BJ (cell line): ENCODE measurements at regions of chr5 and their contacts with region 1.

Region 1: DNA sequence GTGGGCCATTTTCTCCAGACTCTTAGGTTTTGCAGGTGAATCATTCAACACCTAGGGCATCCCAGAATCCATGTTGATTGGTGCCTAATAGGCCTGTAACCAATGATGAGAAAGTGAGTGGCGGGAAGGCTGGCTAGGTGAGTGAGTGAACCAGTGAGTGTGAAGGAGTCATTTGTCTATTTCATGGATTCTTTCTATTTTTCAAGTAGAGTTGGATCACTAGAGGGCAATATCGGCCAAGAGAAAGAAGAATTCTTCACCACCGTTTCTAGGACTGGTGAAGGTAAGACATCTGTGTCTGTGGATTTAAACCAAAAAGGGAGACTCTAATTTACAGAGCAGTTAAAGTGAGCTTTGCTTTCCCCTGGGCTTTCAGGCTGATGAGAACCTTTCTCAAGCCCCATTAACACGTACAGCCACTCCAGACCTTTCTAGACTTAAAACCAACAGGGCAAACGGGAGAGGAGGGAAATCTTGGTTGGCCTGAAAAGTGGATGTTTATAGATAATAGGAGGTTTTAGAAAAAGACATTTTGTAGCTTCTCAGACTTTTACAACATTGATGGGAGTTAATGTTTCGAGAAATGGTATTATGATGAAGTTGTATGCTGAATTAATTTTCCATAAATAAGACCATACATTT is 114.3 kb upstream of the IL12B start:
- DNase-seq: no peak
- H3K4me3 ChIP-seq: no peak overlapping the region
- H3K27me3 ChIP-seq: no peaks in the 10 kb centered on the region
- CTCF ChIP-seq: peak; percentile 51

Region 2: DNA sequence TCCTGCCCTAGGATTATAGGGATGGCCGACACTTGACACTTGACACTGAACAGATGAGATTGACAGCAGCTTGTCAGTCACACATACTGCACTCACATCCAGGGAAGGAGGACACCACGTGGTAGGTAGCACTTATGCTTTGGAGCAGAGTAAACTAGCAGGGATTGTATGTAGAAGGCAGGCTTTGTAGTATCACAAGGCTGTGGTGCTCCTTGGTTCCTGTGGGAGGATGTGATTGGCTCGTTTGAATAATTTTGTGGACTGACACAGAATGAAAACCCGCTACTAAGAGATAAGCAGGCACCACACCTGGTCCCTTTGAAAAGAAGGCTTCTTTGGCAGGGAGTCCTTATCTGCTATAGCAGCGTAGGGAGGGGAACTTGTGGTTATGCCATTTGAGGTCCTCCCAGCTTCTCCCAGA is 50.7 kb before region 1 on chr5:
- CTCF ChIA-PET with region 1: no interaction called
- POLR2A ChIA-PET with region 1: no interaction called
- DNase-seq: no peak
- H3K4me3 ChIP-seq: no peak overlapping the region
- H3K27me3 ChIP-seq: no peaks in the 10 kb centered on the region
- CTCF ChIP-seq: no peak

Region 3: GRCh38 chr5:159456722-159457465 is 12.3 kb after region 1 on chr5:
- CTCF ChIA-PET with region 1: interaction called, 10 read pairs
- POLR2A ChIA-PET with region 1: no interaction called
- DNase-seq: no peak
- H3K4me3 ChIP-seq: no peak overlapping the region
- H3K27me3 ChIP-seq: no peaks in the 10 kb centered on the region
- CTCF ChIP-seq: no peak

Region 4: DNA sequence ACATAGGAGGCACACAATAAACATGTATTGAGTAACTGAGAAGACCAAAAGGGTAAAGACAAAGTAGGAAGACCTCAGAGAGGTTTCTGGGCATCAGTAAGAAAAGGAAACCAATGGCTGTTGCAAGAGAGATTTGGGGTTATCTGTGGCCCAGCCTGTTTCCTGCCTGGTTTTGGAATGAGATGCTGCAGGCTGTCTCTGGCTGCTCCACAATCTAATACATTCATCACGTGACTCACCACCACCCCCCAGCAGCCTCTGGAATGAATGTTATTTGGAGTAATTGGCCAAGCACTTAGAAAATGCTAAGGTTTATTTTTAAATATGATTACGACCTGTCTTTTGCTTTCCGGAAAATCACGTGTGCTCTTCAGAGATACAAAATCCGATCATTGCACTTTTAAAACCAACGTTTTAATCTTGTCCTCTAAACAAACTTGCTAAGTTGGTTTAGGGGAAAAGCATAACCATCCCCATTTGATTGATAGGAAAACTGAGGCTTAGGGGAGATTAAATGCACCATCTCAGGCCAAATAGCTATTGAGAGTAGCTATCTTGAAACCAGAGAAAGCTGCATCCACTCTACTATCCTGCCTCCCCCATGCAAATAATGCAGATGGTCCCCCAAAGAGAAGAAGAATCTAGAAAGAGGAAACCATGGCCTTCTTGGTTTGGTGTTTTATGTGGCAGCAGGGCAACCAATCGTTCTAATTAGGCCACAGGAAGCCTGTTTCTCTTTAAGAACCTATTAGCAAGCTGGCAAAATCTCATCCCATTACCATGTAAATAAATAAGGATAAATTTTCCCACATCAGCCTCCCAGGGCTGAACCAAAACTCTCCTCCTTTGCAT is 319.9 kb after region 1 on chr5:
- CTCF ChIA-PET with region 1: no interaction called
- POLR2A ChIA-PET with region 1: no interaction called
- DNase-seq: peak; percentile 84
- H3K4me3 ChIP-seq: no peak overlapping the region
- H3K27me3 ChIP-seq: no peaks in the 10 kb centered on the region
- CTCF ChIP-seq: no peak

Region 5: DNA sequence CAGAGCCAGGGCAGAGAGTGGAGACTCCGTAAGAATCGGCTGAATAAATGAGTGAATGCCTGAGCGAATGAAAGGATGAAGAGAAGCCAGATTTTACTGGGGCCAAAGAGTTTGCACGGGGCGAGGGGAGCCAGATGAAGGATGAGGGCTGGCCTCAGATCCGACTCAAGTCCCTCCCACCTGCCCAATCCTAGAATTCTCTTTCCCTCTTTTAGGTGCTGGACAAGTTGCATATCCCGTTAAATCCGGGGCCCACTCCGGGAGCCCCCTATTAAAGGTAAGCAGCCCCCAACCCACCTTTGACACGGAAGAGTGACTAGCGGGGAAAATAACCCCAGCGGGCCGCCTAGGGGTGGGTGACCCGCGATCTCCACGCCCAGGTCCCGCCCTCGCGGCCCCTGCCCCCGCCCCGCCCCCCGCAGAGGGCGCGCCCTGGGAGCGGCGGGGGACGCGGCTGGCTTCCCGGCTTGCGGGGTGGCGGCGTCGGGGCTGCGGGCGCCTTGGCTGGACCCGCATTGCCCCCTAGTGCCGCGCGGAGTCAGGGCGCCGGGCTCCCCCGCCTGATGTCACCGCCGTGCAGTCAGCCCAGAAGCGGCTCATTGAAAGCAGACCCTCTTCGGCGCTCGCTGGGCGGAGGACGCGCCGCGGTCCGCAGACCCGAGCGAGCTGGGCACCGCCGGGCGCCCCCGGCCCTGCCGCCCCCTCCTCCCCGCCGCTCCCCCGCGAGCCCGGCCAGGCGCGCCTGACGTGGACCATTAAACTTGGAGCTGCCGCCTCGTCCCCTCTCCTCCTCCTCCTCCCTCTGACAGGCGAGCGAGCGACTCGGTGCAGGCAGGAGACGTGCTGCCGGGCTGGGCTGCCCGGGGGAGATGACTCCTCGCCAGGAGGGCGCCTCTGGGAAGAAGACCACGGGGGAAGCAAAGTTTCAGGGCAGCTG is 471.6 kb after region 1 on chr5 and contains the start of gene ADRA1B:
- CTCF ChIA-PET with region 1: interaction called, 91 read pairs
- POLR2A ChIA-PET with region 1: no interaction called
- DNase-seq: no peak
- H3K4me3 ChIP-seq: peak within 1 kb of the TSS; percentile 33
- H3K27me3 ChIP-seq: no peaks in the 10 kb centered on the region
- CTCF ChIP-seq: peak; percentile 55
- polyA plus RNA-seq, gene ADRA1B: 1.1 and 2.1 TPM in 2 replicates

Region 6: DNA sequence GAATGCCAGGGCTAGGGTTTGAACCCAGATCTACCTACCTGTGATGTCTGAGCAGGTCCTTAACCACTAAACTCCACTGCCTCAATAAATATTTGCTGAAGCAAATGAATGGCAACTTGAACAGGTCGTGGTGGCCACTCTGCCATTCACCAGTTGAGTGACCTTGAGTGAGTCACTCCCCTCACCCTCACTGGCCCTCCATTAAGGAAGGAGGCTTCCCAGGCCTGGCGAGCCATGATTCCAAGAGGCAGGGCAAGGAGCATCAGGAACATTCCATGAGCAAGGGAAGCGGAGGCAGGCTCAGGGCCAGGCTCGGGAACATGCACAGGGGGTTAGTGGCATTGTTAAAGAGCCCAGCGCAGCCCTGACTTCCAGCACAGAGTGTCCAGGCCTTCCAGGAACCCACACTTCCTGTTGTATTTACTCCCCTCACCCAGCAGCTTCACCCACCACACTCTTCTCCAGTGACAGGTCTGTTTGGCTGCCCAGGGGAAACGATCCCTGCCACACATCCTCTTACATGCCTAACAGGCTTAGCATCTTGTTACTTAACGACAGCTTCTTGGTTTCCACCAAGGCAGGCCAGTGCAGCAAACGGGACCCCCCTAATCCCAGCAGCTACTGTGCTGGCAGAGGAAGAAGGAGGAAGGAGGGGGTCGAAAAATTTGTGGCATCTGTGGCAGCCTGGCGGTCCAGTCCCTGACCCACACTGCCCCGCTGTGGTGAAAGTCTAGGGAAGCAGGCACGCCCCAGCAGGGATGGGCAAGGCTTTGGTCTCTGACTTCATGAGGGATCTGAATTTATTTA is 520.7 kb after region 1 on chr5:
- CTCF ChIA-PET with region 1: interaction called, 20 read pairs
- POLR2A ChIA-PET with region 1: no interaction called
- DNase-seq: no peak
- H3K4me3 ChIP-seq: no peak overlapping the region
- H3K27me3 ChIP-seq: no peaks in the 10 kb centered on the region
- CTCF ChIP-seq: peak; percentile 73